Transverse colon (tissue), 4 donors: ENCODE measurements at regions of chr7 and their contacts with region 1.

Region 1: DNA sequence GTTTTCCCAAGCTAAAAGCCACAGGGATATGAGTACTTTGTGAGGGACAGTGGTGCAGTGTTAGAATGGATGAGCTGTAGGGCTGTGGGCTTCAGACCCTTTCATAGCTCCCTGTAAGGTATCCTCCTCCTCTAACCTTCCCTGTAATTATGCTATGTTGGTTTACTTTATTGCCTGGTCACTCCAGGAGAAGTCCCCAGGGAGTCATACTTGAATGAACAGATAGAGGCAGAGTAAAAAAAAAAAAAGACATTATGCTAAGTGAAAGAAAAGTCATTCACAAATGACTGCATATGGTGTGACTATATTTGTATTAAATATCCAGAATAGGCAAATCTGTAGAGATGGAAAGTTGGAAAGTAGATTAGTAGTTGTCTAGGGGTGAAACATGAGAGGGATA is 434.4 kb downstream of the AUTS2 start:
- DNase-seq: no peak
- H3K4me3 ChIP-seq: no peak overlapping the region
- H3K27ac ChIP-seq: no peak overlapping the region
- H3K4me1 ChIP-seq: no peaks in the 10 kb centered on the region
- H3K27me3 ChIP-seq: no peaks in the 10 kb centered on the region
- CTCF ChIP-seq: no peak
- EP300 ChIP-seq: no peak
- POLR2A ChIP-seq: no peak

Region 2: GRCh38 chr7:69115788-69116187 is 916.9 kb before region 1 on chr7:
- in situ Hi-C with region 1: no loop called
- intact Hi-C with region 1: loop called (anchors 5 kb)
- DNase-seq: no peak
- H3K4me3 ChIP-seq: no peak overlapping the region
- H3K27ac ChIP-seq: no peak overlapping the region
- H3K4me1 ChIP-seq: no peaks in the 10 kb centered on the region
- H3K27me3 ChIP-seq: no peaks in the 10 kb centered on the region
- CTCF ChIP-seq: no peak
- EP300 ChIP-seq: no peak
- POLR2A ChIP-seq: no peak